Panc1 (cell line): ENCODE measurements at regions of chr13 and their contacts with region 1.

Region 1: DNA sequence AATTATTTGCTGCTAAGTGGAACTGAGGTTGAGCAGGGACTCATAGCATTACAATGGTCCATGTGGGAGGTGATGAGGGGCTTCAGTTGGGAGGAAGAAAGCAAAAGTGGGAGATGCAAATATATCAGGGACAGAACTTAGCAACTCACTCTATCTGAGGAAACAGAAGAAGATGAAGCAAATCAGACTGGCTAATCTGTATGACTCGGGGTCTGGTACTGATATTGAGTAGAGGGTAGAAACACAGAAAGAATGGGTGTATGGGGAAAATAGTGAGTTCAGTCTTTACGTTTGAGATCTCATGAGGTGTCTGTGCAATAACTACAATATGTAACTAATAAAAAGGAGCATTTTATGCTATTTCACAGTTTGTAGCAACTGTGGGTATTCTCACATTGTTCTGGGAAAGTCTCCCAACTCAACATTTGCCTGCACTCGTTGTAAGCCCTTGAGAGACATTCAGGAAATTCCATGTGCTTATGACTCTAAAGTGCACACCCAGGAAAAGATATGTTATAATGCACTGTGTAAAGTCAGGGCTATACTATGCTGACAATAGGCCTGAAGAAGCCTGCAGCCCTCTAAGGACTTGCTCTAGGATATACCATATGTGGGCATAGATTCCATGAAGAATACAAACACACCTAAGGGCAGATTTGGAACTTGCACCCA is 183.5 kb downstream of the SPRY2 start:
- DNase-seq: no peak
- ATAC-seq: no peak
- H3K4me3 ChIP-seq: no peak overlapping the region
- H3K27ac ChIP-seq: no peak overlapping the region
- H3K4me1 ChIP-seq: no peaks in the 10 kb centered on the region
- H3K27me3 ChIP-seq: no peaks in the 10 kb centered on the region
- CTCF ChIP-seq: no peak

Region 2: GRCh38 chr13:80297094-80297493 is 139.7 kb after region 1 on chr13:
- CTCF ChIA-PET with region 1: interaction called, 10 read pairs
- POLR2A ChIA-PET with region 1: no interaction called
- in situ Hi-C with region 1: no loop called
- intact Hi-C with region 1: no loop called
- DNase-seq: no peak
- ATAC-seq: no peak
- H3K4me3 ChIP-seq: no peak overlapping the region
- H3K27ac ChIP-seq: no peak overlapping the region
- H3K4me1 ChIP-seq: no peaks in the 10 kb centered on the region
- H3K27me3 ChIP-seq: no peaks in the 10 kb centered on the region
- CTCF ChIP-seq: no peak